CD8-positive, alpha-beta memory T cell (primary cell): ENCODE measurements at regions of chr11 and their contacts with region 1.

Region 1: DNA sequence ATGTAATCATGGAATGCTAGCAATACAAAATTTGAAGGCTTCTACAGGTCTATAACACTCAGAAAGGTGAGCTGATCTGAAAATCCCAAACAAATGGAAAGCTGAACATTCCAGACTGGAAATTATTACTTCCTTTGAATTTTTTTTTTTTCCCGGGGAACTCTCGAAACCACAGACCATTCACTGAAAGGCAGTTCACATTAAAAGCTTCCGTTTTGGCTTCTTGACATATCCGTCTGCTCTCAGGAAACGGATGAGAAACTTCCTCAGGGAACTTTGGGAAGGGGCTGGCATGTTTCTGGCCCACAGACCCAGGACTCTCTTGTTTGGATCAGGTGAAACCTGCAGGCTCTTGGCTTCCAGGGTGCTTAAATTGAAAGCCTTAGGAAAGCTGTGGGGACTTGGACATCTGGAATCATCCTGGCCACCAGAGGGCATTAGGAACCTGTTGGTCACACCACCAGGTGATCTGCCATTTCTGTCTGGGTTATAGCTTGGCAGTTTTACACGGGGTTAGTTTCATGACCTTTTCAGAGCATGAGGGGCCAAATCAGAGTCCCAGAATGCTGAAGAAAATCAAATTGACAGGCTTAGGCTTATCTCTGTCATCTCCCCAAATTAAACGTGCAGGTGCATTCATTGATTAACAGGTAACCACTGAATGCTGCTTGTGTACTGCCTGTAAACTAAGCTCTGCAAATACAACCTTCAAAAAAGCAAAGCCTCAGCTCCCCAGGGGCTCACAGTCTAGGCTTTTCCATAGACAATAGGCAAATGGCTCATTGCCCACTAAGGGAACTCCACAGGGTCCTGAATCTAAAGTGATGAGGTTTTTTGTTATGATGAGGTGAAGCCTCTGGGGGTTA is 22.7 kb upstream of the GRAMD1B start:
- DNase-seq: peak; percentile 35 to 80 (median 43)
- H3K4me3 ChIP-seq: no peak overlapping the region
- H3K4me3 Mint-ChIP-seq: peak overlapping the region in 1 of 7 donors; percentile 19
- H3K27ac ChIP-seq: no peak overlapping the region
- H3K27ac Mint-ChIP-seq: no peak overlapping the region
- H3K4me1 ChIP-seq: no peaks in the 10 kb centered on the region
- H3K4me1 Mint-ChIP-seq: peaks cover 0 to 6% (median 5%) of the 10 kb centered on the region in 3 donors
- H3K27me3 ChIP-seq: no peaks in the 10 kb centered on the region
- H3K27me3 Mint-ChIP-seq: peaks cover 1 to 2% of the 10 kb centered on the region in 2 donors

Region 2: DNA sequence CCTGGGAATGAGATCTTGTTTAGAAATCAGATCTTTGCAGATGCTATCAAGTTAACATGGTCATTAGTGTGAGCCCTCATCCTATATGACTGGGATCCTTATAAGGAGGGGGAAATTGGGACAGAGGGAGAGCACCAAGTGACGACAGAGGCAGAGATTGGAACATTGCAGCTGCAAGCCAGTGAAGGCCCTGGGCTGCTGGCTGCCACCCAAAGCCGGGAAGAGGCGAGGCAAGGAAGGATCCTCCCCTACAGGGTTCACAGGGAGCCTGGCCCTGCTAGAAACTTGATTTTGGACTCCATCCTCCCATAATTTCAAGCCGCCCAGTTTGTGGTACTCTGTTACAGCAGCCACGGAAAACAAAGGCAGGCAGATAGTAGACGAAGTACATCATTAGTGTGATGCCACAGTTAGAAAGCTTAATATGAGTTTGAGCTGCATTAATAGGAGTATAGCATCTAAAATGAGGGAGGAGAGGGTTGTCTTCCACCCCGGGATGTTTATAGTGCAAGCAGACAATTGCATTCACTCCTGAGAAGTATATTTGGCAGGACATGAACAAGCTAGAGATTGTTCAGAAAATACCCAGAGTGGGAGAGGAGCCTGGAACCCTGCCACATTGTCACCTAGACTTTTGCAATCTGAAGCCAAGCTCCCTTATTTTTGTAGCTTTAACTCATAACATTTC is 155.6 kb before region 1 on chr11:
- CTCF ChIA-PET with region 1: no interaction called
- POLR2A ChIA-PET with region 1: no interaction called
- DNase-seq: no peak
- H3K4me3 ChIP-seq: no peak overlapping the region
- H3K4me3 Mint-ChIP-seq: no peak overlapping the region
- H3K27ac ChIP-seq: no peak overlapping the region
- H3K27ac Mint-ChIP-seq: no peak overlapping the region
- H3K4me1 ChIP-seq: peaks cover 5% of the 10 kb centered on the region
- H3K4me1 Mint-ChIP-seq: peaks cover 4 to 7% (median 7%) of the 10 kb centered on the region in 3 donors
- H3K27me3 ChIP-seq: no peaks in the 10 kb centered on the region
- H3K27me3 Mint-ChIP-seq: peaks cover 16 to 52% of the 10 kb centered on the region in 2 donors

Region 3: DNA sequence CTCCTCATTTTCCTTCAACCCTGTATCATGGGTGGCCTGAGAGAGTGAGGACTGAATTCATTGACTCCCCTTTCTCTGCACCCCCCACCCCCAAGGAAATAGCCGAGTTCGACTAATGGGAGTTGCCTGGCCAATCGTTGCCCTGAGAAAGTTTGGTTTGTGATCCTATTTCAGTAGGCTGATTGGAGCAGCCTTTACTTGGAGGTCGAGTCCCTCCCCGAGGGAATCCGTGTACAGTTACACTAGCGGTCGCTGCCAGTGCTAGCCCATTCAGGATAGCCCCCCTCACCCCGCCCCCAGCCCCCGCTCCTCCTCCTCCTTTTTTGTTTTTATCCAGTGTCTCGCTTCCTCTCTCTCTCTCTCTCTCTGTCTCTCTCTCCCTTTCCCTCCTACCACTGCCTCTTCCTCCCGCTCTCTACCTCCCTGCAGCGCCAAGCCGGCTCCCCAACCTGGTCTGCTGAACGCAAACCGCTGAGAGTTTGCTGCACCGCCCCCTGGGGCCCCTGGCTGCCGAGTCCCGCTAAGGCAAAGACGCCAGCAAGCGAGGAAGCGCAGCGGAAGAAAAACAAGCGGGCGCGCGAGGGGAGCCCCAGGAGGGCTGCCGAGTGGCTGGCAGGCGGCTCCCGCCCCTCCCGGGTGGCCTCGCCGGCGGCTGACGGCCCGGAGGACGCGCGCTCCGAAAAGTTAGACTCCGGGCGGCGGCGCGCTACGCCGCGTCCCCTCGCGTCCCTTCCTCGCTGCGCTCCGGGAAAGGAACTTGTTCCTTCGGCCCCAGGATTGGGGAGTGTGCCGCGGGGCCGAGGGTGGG is 22.8 kb after region 1 on chr11 and contains the start of gene GRAMD1B:
- CTCF ChIA-PET with region 1: interaction called, 46 read pairs
- POLR2A ChIA-PET with region 1: interaction called, 3 read pairs
- DNase-seq: peak; percentile 53 to 85 (median 66)
- H3K4me3 ChIP-seq: peak within 1 kb of the TSS; percentile 66
- H3K4me3 Mint-ChIP-seq: peak within 1 kb of the TSS; percentile 91 to 95 (median 92)
- H3K27ac ChIP-seq: peak within 1 kb of the TSS; percentile 59
- H3K27ac Mint-ChIP-seq: peak within 1 kb of the TSS; percentile 49 to 95 (median 90)
- H3K4me1 ChIP-seq: peaks cover 6% of the 10 kb centered on the region
- H3K4me1 Mint-ChIP-seq: peaks cover 18 to 40% (median 35%) of the 10 kb centered on the region in 3 donors
- H3K27me3 ChIP-seq: no peaks in the 10 kb centered on the region
- H3K27me3 Mint-ChIP-seq: peaks cover 0 to 8% of the 10 kb centered on the region in 2 donors
- total RNA-seq, gene GRAMD1B: 27.9 to 28.2 TPM

Region 4: GRCh38 chr11:123461164-123461563 is 53.8 kb after region 1 on chr11:
- CTCF ChIA-PET with region 1: interaction called, 24 read pairs
- POLR2A ChIA-PET with region 1: no interaction called
- DNase-seq: no peak
- H3K4me3 ChIP-seq: no peak overlapping the region
- H3K4me3 Mint-ChIP-seq: no peak overlapping the region
- H3K27ac ChIP-seq: no peak overlapping the region
- H3K27ac Mint-ChIP-seq: no peak overlapping the region
- H3K4me1 ChIP-seq: peaks cover 15% of the 10 kb centered on the region
- H3K4me1 Mint-ChIP-seq: peaks cover 10 to 27% (median 14%) of the 10 kb centered on the region in 3 donors
- H3K27me3 ChIP-seq: no peaks in the 10 kb centered on the region
- H3K27me3 Mint-ChIP-seq: no peaks in the 10 kb centered on the region

Region 5: GRCh38 chr11:123487157-123487780 is 79.9 kb after region 1 on chr11:
- CTCF ChIA-PET with region 1: interaction called, 15 read pairs
- POLR2A ChIA-PET with region 1: no interaction called
- DNase-seq: no peak
- H3K4me3 ChIP-seq: no peak overlapping the region
- H3K4me3 Mint-ChIP-seq: no peak overlapping the region
- H3K27ac ChIP-seq: no peak overlapping the region
- H3K27ac Mint-ChIP-seq: no peak overlapping the region
- H3K4me1 ChIP-seq: no peaks in the 10 kb centered on the region
- H3K4me1 Mint-ChIP-seq: peaks cover 0 to 11% (median 0%) of the 10 kb centered on the region in 3 donors
- H3K27me3 ChIP-seq: no peaks in the 10 kb centered on the region
- H3K27me3 Mint-ChIP-seq: peaks cover 0 to 6% of the 10 kb centered on the region in 2 donors